ENCODE measurements at regions of chr6 and their contacts with region 1.

Region 1: GRCh38 chr6:7899101-7899888 is 11.3 kb downstream of the TXNDC5 start:
- DNase-seq: peak; percentile 40
- ATAC-seq: peak; percentile 39
- H3K4me3 ChIP-seq: no peak overlapping the region
- H3K4me3 Mint-ChIP-seq: no peak overlapping the region
- H3K27ac ChIP-seq: no peak overlapping the region
- H3K27ac Mint-ChIP-seq: peak overlapping the region; percentile 46
- H3K4me1 ChIP-seq: peaks cover 10 to 17% of the 10 kb centered on the region in 2 donors
- H3K4me1 Mint-ChIP-seq: peaks cover 33% of the 10 kb centered on the region
- H3K27me3 ChIP-seq: no peaks in the 10 kb centered on the region
- H3K27me3 Mint-ChIP-seq: no peaks in the 10 kb centered on the region
- CTCF ChIP-seq: no peak

Region 2: GRCh38 chr6:7992002-7992815 is 92.9 kb after region 1 on chr6:
- CTCF ChIA-PET with region 1: interaction called, 16 read pairs
- POLR2A ChIA-PET with region 1: no interaction called
- intact Hi-C with region 1: loop called (anchors 1 kb)
- DNase-seq: peak; percentile 60
- ATAC-seq: peak; percentile 41
- H3K4me3 ChIP-seq: no peak overlapping the region
- H3K4me3 Mint-ChIP-seq: no peak overlapping the region
- H3K27ac ChIP-seq: no peak overlapping the region
- H3K27ac Mint-ChIP-seq: no peak overlapping the region
- H3K4me1 ChIP-seq: peaks cover 5 to 6% of the 10 kb centered on the region in 2 donors
- H3K4me1 Mint-ChIP-seq: peaks cover 5% of the 10 kb centered on the region
- H3K27me3 ChIP-seq: no peaks in the 10 kb centered on the region
- H3K27me3 Mint-ChIP-seq: no peaks in the 10 kb centered on the region
- CTCF ChIP-seq: peak; percentile 51

Region 3: DNA sequence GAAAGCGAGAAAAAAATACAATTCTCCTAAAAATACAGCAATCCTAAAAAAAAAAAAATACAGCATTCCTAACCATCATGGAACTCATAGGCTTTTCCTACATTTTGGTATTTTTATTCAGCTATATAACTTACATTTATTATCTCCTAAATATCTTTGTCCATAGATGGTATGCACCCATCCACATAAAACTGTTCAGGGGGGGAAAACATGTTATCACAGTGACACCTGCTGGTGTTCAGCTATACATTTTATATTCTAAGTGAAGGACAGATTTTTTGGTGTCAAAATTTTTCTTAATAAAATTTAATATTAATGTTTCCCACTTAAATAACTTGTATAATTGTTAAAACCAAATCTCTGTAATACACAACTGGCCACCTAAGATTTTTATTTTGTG is 106.9 kb after region 1 on chr6:
- CTCF ChIA-PET with region 1: interaction called, 7 read pairs
- POLR2A ChIA-PET with region 1: no interaction called
- intact Hi-C with region 1: loop called (anchors 1 kb)
- DNase-seq: peak; percentile 58
- ATAC-seq: no peak
- H3K4me3 ChIP-seq: no peak overlapping the region
- H3K4me3 Mint-ChIP-seq: no peak overlapping the region
- H3K27ac ChIP-seq: no peak overlapping the region
- H3K27ac Mint-ChIP-seq: no peak overlapping the region
- H3K4me1 ChIP-seq: no peaks in the 10 kb centered on the region
- H3K4me1 Mint-ChIP-seq: no peaks in the 10 kb centered on the region
- H3K27me3 ChIP-seq: no peaks in the 10 kb centered on the region
- H3K27me3 Mint-ChIP-seq: peaks cover 3% of the 10 kb centered on the region
- CTCF ChIP-seq: peak; percentile 75